Activated CD4-positive, alpha-beta T cell treated with anti-CD3 and anti-CD28 coated beads for 36 hours (primary cell): ENCODE measurements at regions of chr17 and their contacts with region 1.

Region 1: DNA sequence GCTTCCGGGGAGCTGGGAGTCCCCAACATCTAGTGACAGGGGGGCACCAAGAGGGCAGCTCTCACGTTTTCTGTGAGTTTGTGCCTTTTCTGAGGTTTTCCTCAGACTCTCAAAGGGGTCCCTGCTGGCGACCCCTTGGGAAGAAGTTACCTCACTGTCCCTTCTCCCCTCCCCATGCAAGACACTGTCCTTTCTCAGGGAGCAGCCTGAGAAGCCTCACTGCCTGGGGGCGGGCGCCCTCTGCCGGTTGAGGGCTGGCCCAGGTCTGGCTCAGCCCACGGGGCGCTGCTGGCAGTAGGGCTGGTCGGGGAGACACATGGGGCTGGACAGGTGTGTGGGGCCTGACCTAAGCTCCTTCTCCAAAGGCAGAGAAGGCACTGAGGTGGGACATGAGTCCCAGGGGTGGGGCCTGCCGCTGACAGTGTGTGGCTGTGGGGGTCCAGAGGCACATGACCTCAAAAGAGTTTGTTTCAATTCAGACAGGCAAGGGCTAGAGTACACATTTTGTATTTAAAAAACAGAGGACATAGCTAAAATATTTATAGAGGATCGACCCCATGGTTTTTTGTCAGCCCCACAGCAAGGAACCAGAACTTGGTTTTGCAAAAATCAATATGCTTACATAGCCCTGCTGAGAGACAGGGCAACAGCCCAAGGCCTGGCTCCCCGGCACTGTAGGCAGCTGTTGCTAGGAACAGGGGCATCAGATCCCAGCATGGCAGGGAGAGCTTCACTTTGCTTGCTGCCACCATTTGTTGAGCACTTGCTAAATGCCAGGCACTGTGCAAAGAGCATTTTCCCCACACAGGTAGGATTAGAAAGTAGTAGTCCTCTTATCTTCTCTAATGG is 18.5 kb upstream of the ALDH3A1 start:
- DNase-seq: peak; percentile 89
- ATAC-seq: peak; percentile 80
- H3K4me3 Mint-ChIP-seq: no peak overlapping the region
- H3K27ac Mint-ChIP-seq: peak overlapping the region; percentile 72
- H3K4me1 Mint-ChIP-seq: peaks cover 46% of the 10 kb centered on the region
- H3K27me3 Mint-ChIP-seq: no peaks in the 10 kb centered on the region

Region 2: DNA sequence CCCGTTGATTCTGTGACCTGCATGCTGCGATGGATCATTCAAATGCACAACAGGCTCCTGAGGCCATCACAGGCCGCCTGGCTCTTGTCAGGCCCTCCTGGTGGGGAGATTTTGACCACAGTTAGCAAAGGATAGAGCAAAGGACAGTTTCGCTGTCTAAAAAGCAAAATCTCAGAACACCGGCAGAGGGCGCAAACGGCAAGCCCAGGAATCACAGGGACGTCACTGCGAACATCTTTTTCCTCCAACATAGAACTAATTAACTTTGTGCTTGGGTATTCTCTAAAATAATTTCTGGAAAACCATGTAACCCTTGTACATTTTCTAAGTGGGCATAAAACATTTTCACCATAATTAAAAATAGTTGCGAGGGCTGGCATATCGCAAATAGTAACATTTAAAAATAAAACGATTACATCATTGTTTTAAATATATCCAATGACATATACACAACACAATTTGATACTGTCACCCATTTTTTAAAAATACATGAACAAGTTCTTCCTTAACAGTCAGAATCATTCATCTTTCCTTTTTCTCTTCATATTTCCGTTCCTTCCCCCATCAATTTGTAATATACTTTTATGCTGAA is 252.7 kb before region 1 on chr17:
- CTCF ChIA-PET with region 1: interaction called, 37 read pairs
- POLR2A ChIA-PET with region 1: no interaction called
- intact Hi-C with region 1: loop called (anchors 1 kb)
- DNase-seq: peak; percentile 82
- ATAC-seq: peak; percentile 69
- H3K4me3 Mint-ChIP-seq: no peak overlapping the region
- H3K27ac Mint-ChIP-seq: no peak overlapping the region
- H3K4me1 Mint-ChIP-seq: no peaks in the 10 kb centered on the region
- H3K27me3 Mint-ChIP-seq: peaks cover 3% of the 10 kb centered on the region

Region 3: DNA sequence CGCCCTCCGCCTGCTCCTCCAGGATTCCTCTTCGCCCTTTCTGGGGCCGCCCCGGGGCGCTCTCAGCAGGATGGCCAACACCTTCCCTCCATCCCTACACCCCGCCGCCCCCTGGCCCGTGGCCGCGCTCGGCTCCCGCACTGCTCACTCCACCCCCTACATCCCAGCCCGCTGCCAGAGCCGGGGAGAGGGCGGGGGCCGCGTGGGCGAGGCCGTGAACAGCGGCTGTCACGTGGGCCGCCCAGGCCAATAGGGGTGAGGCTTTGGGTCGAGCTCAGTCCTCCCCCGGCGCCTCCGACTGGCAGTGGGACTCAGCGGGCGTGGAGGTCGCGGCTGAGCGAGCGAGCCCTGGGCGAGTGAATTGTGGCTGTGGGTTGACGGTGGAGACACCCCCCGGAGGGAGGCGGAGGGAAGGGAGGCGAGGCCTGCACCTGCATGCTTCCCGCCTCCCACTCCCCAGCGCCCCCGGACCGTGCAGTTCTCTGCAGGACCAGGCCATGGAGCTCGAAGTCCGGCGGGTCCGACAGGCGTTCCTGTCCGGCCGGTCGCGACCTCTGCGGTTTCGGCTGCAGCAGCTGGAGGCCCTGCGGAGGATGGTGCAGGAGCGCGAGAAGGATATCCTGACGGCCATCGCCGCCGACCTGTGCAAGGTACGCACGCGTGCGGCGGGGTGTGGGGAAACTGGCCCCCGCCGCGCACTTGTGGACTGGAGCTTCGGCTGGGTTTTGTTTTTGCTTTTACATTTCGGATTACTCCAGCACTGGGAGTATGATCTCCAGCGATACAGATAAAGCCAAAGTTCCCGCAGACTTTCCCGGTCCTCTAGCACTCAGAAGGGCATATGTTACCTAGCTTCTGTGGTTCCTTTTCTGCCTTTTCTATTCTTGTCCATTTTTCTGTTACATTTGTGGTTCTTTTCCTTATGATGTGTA is 117.9 kb before region 1 on chr17 and contains the start of gene ALDH3A2:
- CTCF ChIA-PET with region 1: interaction called, 14 read pairs
- POLR2A ChIA-PET with region 1: interaction called, 4 read pairs
- intact Hi-C with region 1: loop called (anchors 2 to 5 kb)
- DNase-seq: peak; percentile 97
- ATAC-seq: peak; percentile 94
- H3K4me3 Mint-ChIP-seq: peak within 1 kb of the TSS; percentile 79
- H3K27ac Mint-ChIP-seq: peak within 1 kb of the TSS; percentile 87
- H3K4me1 Mint-ChIP-seq: peaks cover 38% of the 10 kb centered on the region
- H3K27me3 Mint-ChIP-seq: peaks cover 1% of the 10 kb centered on the region
- total RNA-seq, gene ALDH3A2: 18.5 to 23.9 TPM

Region 4: DNA sequence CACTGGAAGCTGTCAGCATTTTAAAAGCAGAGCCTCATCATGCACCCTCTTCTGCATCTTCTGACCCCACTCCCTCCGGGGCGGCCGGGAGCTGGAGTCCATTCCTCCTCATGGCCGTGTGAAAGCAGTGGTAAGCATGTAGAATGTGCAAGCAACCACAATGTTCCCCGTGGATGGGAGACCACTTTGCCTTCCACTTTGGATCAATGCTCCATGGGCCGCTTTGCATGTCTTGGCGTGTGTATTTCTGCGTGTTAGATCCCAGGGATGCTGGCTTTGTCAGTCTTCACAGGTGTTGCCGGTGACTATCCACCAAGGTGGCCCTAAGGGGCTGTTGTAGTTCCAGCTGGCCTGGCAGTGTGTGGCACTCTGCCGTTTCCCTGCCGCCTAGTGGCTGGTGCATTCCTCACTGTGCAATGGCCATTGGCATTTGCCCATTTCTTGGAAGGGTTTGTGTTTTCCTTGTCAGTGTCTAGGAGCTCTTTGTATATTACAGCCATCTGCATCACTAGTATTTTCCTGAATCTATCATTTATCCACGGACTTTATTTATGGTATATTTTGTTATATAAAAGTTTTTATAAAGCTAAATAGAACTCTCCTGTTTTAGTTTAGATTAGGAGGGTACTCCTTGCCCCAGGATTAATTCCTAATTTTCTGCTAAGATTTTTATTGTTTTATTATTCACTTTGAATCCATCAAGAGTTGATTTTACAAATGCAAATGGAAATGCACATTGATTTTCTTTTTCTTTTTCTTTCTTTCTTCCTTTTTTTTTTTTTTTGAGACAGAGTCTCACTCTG is 12.8 kb before region 1 on chr17:
- CTCF ChIA-PET with region 1: interaction called, 12 read pairs
- POLR2A ChIA-PET with region 1: no interaction called
- intact Hi-C with region 1: no loop called
- DNase-seq: no peak
- ATAC-seq: no peak
- H3K4me3 Mint-ChIP-seq: no peak overlapping the region
- H3K27ac Mint-ChIP-seq: no peak overlapping the region
- H3K4me1 Mint-ChIP-seq: peaks cover 7% of the 10 kb centered on the region
- H3K27me3 Mint-ChIP-seq: no peaks in the 10 kb centered on the region

Region 5: DNA sequence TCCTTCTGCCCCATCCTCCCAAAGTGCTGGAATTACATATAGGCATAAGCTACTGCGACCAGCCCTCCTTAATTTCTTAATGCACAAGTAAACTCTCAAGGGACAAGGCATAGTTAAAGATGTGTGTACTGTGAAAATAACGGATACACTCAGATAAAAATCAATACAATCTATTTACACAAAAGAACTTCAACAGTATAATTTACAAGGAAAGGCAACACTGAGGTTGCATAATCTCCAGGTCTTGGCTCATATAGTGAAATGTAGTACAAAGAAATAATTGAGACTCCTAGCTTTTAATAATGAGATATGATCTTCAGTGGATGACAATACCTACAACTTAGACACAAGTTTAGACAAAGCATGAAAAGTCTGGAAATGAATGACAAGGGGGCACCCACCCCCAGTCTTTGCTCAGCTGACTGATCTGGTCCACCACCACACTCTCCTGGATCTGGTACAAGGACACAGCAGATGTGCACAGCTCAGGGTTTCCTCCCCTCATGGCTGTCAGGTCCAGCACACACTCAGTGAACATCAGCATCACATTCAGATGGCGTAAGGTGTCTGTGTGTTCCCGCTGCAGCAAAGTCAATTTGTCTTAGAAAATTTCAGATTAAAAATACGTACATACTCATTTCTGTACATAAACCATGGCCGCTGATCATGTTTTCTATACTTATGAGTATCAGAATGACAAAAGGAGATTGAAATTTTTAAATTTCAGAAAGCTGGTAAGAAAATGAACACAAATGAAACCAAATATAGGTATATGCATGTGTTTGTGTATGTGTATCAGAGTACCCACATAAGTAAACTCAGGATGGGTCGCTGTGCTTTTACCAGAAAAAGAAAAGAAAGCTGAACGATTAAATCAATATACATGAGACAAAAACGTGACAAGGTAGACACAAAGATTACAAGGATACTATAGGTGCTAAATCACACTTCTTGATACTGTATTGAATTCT is 15.1 kb after region 1 on chr17:
- CTCF ChIA-PET with region 1: interaction called, 4 read pairs
- POLR2A ChIA-PET with region 1: no interaction called
- intact Hi-C with region 1: loop called in 1 of 2 experiments (anchors 2 kb)
- DNase-seq: no peak
- ATAC-seq: peak; percentile 61
- H3K4me3 Mint-ChIP-seq: no peak overlapping the region
- H3K27ac Mint-ChIP-seq: peak overlapping the region; percentile 31
- H3K4me1 Mint-ChIP-seq: peaks cover 8% of the 10 kb centered on the region
- H3K27me3 Mint-ChIP-seq: no peaks in the 10 kb centered on the region

Region 6: GRCh38 chr17:19915245-19915978 is 148.8 kb after region 1 on chr17:
- CTCF ChIA-PET with region 1: no interaction called
- POLR2A ChIA-PET with region 1: no interaction called
- intact Hi-C with region 1: no loop called
- DNase-seq: no peak
- ATAC-seq: no peak
- H3K4me3 Mint-ChIP-seq: no peak overlapping the region
- H3K27ac Mint-ChIP-seq: peak overlapping the region; percentile 32
- H3K4me1 Mint-ChIP-seq: peaks cover 4% of the 10 kb centered on the region
- H3K27me3 Mint-ChIP-seq: no peaks in the 10 kb centered on the region